Mammary epithelial cell (primary cell): ENCODE measurements at regions of chr3 and their contacts with region 1.

Region 1: DNA sequence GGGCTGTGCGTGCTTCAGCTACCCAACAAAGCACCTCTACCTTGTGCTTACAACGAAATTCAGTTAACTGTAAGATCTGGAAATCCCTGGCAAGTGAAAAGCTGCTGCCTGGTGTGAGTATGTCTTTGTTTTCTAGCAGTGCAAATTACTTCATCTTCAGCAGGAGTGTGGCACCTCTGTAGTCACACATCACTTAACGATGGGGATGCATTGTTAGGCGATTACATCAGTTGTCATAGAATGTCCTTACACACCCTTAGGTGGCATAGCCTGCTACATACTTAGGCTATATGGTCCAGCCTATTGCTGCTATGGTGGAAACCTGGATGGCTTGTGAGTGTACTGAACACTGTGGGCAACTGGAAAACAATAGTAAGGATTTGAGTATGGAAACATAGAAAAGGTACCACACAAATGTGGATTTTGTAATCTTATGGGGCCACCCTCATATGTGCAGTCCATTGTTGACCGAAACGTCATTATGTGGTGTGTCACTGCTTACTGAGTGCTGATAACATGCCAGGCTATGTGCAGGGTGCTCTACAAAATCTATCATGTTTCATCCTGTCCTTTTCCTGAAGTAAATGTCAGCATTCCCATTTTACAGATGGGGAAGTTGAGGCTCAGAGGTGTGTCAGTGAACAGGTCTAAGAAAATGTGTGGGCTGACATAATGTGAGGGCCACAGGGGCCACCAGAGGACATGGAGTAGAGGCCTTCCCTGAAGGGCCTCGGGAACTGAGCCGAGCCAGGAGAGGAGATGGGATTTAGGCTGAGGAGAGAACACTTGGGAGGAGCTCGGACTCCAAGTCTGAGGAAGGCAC is 173.5 kb downstream of the VGLL4 start:
- DNase-seq: no peak
- H3K4me3 ChIP-seq: no peak overlapping the region
- H3K27ac ChIP-seq: no peak overlapping the region
- H3K4me1 ChIP-seq: no peaks in the 10 kb centered on the region
- H3K27me3 ChIP-seq: no peaks in the 10 kb centered on the region
- CTCF ChIP-seq: no peak

Region 2: DNA sequence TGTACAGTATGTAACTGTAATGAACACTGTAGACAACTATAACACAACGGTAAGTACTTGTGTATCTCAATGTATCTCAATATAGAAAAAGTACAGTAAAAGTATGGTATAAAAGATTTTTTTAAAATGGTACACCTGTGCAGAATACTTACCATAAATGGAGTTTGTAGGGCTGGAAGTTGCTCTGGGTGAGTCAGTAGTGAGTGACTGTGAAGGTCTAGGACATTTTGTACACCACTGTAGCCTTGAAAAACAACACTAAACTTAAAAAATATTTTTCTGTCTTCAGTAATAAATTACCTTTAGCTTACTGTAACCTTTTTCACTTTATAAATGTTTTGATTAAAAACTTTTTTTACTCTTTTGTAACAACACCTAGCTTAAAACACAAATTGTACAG is 55.1 kb before region 1 on chr3:
- CTCF ChIA-PET with region 1: no interaction called
- dilution Hi-C with region 1: no loop called
- in situ Hi-C with region 1: no loop called
- intact Hi-C with region 1: no loop called
- DNase-seq: no peak
- H3K4me3 ChIP-seq: no peak overlapping the region
- H3K27ac ChIP-seq: no peak overlapping the region
- H3K4me1 ChIP-seq: no peaks in the 10 kb centered on the region
- H3K27me3 ChIP-seq: no peaks in the 10 kb centered on the region
- CTCF ChIP-seq: no peak

Region 3: GRCh38 chr3:11523572-11524101 is 53.4 kb after region 1 on chr3:
- CTCF ChIA-PET with region 1: no interaction called
- dilution Hi-C with region 1: loop called (anchors 5 kb)
- in situ Hi-C with region 1: no loop called
- intact Hi-C with region 1: no loop called
- DNase-seq: no peak
- H3K4me3 ChIP-seq: no peak overlapping the region
- H3K27ac ChIP-seq: peak overlapping the region; percentile 43
- H3K4me1 ChIP-seq: peaks cover 22% of the 10 kb centered on the region
- H3K27me3 ChIP-seq: no peaks in the 10 kb centered on the region
- CTCF ChIP-seq: no peak